ENCODE measurements at regions of chr6 and their contacts with region 1.

Region 1: GRCh38 chr6:2988426-2989331 is 11.0 kb upstream of the NQO2 start:
- DNase-seq: peak; percentile 95 to 97 (median 96)
- ATAC-seq: peak; percentile 91 to 93
- H3K4me3 ChIP-seq: peak overlapping the region; percentile 85
- H3K27ac ChIP-seq: peak overlapping the region; percentile 100
- H3K4me1 ChIP-seq: peaks cover 2% of the 10 kb centered on the region
- H3K27me3 ChIP-seq: no peaks in the 10 kb centered on the region

Region 2: GRCh38 chr6:2841264-2842138 is 147.2 kb before region 1 on chr6 and contains the start of gene SERPINB1:
- intact Hi-C with region 1: loop called in 3 of 4 experiments (anchors 5 to 10 kb)
- DNase-seq: peak; percentile 94 to 97 (median 97)
- ATAC-seq: peak; percentile 95
- H3K4me3 ChIP-seq: peak within 1 kb of the TSS; percentile 56
- H3K27ac ChIP-seq: peak within 1 kb of the TSS; percentile 79
- H3K4me1 ChIP-seq: peaks cover 17% of the 10 kb centered on the region
- H3K27me3 ChIP-seq: no peaks in the 10 kb centered on the region
- total RNA-seq, gene SERPINB1: 27.3 to 42.1 (median 32.7) TPM

Region 3: DNA sequence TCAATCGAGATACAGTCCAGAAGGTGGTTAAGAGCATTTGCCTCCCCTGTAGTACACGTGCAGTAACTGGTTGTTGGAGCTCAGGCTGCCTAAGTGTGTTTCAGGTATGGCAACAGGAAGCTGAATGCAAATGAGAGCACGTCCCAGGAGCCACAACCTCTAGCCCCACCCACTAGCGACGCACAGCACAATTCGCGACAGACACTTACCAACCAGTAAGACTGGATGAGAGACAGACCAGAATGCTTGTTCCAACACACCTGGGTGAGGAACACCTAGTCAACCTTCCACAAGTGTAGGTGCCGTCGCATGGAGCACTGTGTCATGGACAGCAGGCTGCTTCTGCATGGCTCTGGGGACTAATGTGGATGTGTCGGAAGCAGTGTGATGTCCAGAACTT is 139.8 kb before region 1 on chr6:
- intact Hi-C with region 1: loop called in 3 of 4 experiments (anchors 5 to 10 kb)
- DNase-seq: no peak
- ATAC-seq: no peak
- H3K4me3 ChIP-seq: no peak overlapping the region
- H3K27ac ChIP-seq: no peak overlapping the region
- H3K4me1 ChIP-seq: peaks cover 5% of the 10 kb centered on the region
- H3K27me3 ChIP-seq: no peaks in the 10 kb centered on the region

Region 4: DNA sequence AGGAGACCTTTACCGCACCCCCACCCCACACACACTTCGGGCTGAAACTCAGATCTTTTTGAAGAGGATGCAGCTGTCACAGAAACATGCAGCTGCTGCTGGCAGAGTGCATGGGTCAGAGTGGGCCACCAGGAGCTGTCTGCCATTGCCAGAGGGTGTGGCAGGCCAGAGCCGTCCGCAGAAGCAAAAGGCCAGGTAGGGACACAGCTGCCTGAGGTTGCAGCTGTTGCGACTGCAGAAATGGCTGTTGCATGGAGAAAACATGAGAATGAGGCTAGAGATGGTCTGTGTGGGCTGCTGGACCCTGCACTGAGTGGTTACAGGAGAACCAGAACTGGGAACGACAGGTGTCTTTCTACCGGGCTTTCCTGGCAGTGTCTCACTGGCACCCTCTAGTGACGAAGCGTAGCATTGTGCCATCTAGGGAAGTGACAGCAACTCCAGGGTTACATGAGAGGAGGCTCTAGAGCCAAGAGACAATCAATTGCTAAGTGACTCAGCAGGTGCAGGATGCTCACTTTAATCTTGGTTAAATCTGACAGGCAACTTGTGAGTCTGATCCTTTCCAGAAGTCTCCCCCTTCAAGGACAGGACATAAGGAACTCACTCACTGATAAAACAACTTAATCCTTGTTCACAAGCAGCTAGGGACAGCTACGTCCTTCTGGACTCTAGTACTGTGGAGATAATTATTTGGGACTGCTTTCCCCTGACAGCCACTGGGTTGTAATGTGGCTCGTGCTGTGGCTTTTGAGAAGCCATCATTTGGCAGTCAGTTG is 56.5 kb before region 1 on chr6:
- intact Hi-C with region 1: loop called in 2 of 4 experiments (anchors 5 to 10 kb)
- DNase-seq: peak; percentile 72 to 92 (median 86)
- ATAC-seq: peak; percentile 92 to 94
- H3K4me3 ChIP-seq: no peak overlapping the region
- H3K27ac ChIP-seq: peak overlapping the region; percentile 31
- H3K4me1 ChIP-seq: peaks cover 3% of the 10 kb centered on the region
- H3K27me3 ChIP-seq: no peaks in the 10 kb centered on the region

Region 5: GRCh38 chr6:2938632-2939083 is 50.0 kb before region 1 on chr6:
- intact Hi-C with region 1: loop called in 2 of 4 experiments (anchors 5 to 10 kb)
- DNase-seq: peak in 1 of 3 donors; percentile 33
- ATAC-seq: peak in 1 of 2 donors; percentile 4
- H3K4me3 ChIP-seq: no peak overlapping the region
- H3K27ac ChIP-seq: peak overlapping the region; percentile 17
- H3K4me1 ChIP-seq: peaks cover 4% of the 10 kb centered on the region
- H3K27me3 ChIP-seq: no peaks in the 10 kb centered on the region

Region 6: DNA sequence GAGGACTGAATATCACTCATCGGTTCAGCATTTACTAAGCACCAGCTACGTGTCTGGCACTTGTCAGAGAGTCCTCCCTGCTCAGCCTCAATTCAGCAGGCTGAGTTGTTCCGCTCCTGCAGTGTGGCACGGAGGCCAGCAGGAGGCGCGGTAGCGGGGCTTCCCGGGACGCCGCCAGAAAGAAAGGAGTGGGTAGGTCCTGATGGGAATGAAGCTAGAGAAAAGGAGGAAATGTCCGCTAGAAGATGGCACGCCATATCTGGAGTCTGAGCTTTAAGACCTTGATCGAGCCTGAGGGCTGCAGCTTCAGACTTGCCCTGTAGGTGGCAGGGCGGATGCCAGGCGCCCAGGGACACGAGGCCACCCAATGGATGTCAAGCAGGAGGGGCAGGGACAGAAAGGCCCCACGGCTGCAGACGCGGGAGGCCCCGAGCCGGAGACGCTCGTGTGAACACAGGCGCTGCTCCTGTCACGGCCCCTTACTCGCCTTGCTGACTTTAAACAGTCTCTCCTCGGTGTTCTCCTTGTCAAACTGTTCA is 36.1 kb before region 1 on chr6:
- intact Hi-C with region 1: loop called in 2 of 4 experiments (anchors 5 kb)
- DNase-seq: peak; percentile 77 to 90 (median 89)
- ATAC-seq: peak; percentile 76 to 82
- H3K4me3 ChIP-seq: no peak overlapping the region
- H3K27ac ChIP-seq: peak overlapping the region; percentile 55
- H3K4me1 ChIP-seq: peaks cover 3% of the 10 kb centered on the region
- H3K27me3 ChIP-seq: no peaks in the 10 kb centered on the region